Caco-2 (cell line): ENCODE measurements at regions of chr5 and their contacts with region 1.

Region 1: DNA sequence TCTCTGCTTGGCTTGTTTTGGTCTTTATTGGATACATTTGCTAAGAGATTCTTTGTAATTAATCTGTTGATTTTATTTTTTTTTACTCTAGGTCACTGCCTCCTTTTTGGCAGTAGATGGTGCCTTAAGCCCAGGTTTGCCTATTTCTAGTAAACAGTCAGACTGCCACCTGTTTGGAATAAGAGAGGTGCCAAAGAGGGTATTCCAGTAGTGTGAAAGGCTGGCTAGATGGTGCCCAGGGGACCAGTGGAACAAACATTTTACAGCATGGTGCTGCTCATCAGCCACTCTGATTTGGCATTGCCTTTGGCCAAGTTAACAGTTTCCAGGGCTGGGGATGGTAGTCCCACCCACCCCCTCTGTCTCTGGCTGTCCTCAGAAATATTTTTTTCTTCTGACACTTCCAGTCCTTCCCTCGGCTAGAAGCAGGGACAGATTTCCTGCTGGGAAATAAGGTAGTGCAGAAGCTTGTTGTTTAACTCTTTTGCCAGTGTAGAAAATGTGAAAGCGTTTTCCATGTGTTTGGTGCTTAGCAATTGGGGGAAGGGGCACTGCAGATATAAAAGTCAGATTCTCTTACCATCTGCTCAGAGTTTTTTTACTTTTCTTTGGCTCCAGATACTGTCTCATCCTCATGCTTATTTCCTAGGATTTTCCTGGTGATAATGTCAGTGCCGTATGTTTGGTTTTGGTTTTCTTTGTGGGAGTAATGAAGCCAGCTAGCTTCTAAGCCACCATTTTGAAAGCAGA is 36.6 kb upstream of the FBXL7 start:
- DNase-seq: no peak
- H3K4me3 ChIP-seq: no peak overlapping the region
- H3K4me3 Mint-ChIP-seq: no peak overlapping the region
- H3K27ac Mint-ChIP-seq: no peak overlapping the region
- H3K4me1 ChIP-seq: no peaks in the 10 kb centered on the region
- H3K4me1 Mint-ChIP-seq: no peaks in the 10 kb centered on the region
- H3K27me3 ChIP-seq: no peaks in the 10 kb centered on the region
- H3K27me3 Mint-ChIP-seq: no peaks in the 10 kb centered on the region
- CTCF ChIP-seq: no peak

Region 2: GRCh38 chr5:15794052-15794985 is 330.9 kb after region 1 on chr5:
- CTCF ChIA-PET with region 1: no interaction called
- POLR2A ChIA-PET with region 1: no interaction called
- intact Hi-C with region 1: loop called (anchors 10 kb)
- DNase-seq: no peak
- H3K4me3 ChIP-seq: no peak overlapping the region
- H3K4me3 Mint-ChIP-seq: no peak overlapping the region
- H3K27ac Mint-ChIP-seq: no peak overlapping the region
- H3K4me1 ChIP-seq: no peaks in the 10 kb centered on the region
- H3K4me1 Mint-ChIP-seq: no peaks in the 10 kb centered on the region
- H3K27me3 ChIP-seq: no peaks in the 10 kb centered on the region
- H3K27me3 Mint-ChIP-seq: no peaks in the 10 kb centered on the region
- CTCF ChIP-seq: no peak